ENCODE measurements at regions of chr11 and their contacts with region 1.

Region 1: DNA sequence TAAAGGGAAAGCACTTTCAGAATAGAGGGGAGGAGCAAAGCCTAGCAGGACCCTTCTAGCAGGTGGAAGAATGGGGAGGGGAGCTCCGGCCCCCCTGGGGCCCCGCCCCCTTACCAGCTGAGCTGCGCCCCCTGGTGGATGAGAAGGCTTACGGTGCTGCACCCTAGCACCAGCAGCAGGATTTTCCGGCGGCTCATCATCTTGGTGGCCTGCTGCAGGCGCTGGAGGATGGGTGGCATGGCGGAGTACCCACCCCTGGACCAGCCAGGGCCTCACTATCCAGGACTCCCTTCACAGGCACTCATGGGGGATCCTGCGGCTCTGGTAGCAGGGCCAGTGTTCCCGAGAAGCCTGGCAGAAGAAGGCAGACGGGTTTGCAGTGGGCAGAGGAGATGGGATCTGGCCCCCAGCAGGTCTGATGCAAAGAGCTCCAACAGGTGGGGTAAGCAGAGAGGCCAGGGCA is 3.8 kb downstream of the GAL3ST3 start:
- DNase-seq: peak; percentile 77 to 89 (median 82)
- H3K4me3 ChIP-seq: no peak overlapping the region
- H3K4me3 Mint-ChIP-seq: peak overlapping the region in 5 of 7 donors; percentile 16 to 75 (median 55)
- H3K27ac ChIP-seq: no peak overlapping the region
- H3K27ac Mint-ChIP-seq: peak overlapping the region in 4 of 8 donors; percentile 55 to 68 (median 56)
- H3K4me1 ChIP-seq: peaks cover 13% of the 10 kb centered on the region
- H3K4me1 Mint-ChIP-seq: peaks cover 10 to 18% (median 14%) of the 10 kb centered on the region in 3 donors
- H3K27me3 ChIP-seq: no peaks in the 10 kb centered on the region
- H3K27me3 Mint-ChIP-seq: peaks cover 4 to 5% of the 10 kb centered on the region in 2 donors

Region 2: DNA sequence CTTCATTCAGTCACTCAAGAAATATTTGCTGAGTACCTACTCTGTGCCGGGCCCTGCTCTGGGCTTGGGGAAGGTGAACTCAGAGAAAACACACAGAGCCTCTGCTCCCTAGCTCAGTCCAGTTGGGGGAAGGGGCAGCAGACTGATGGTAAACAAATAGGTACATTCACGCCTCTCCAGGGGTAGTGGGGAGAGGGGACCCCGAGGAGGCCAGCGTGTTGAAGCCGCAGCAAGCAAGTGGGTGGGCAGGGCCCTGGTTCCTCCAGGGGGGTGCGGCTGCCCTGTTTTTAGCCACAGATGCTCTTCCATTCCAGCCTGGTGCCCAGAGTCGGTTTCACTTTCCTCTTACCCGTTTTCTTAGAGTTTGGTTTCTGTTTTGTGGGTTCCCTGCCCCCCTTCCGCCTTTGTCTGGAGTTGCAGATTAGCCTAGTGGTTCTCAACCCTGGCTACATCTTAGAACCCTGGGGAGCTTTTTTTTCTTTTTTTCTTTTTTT is 117.3 kb before region 1 on chr11:
- CTCF ChIA-PET with region 1: no interaction called
- POLR2A ChIA-PET with region 1: no interaction called
- DNase-seq: peak; percentile 59 to 88 (median 78)
- H3K4me3 ChIP-seq: peak overlapping the region; percentile 63
- H3K4me3 Mint-ChIP-seq: peak overlapping the region; percentile 55 to 88 (median 77)
- H3K27ac ChIP-seq: peak overlapping the region; percentile 70
- H3K27ac Mint-ChIP-seq: peak overlapping the region; percentile 89 to 99 (median 96)
- H3K4me1 ChIP-seq: peaks cover 22% of the 10 kb centered on the region
- H3K4me1 Mint-ChIP-seq: peaks cover 23 to 45% (median 32%) of the 10 kb centered on the region in 3 donors
- H3K27me3 ChIP-seq: no peaks in the 10 kb centered on the region
- H3K27me3 Mint-ChIP-seq: no peaks in the 10 kb centered on the region

Region 3: DNA sequence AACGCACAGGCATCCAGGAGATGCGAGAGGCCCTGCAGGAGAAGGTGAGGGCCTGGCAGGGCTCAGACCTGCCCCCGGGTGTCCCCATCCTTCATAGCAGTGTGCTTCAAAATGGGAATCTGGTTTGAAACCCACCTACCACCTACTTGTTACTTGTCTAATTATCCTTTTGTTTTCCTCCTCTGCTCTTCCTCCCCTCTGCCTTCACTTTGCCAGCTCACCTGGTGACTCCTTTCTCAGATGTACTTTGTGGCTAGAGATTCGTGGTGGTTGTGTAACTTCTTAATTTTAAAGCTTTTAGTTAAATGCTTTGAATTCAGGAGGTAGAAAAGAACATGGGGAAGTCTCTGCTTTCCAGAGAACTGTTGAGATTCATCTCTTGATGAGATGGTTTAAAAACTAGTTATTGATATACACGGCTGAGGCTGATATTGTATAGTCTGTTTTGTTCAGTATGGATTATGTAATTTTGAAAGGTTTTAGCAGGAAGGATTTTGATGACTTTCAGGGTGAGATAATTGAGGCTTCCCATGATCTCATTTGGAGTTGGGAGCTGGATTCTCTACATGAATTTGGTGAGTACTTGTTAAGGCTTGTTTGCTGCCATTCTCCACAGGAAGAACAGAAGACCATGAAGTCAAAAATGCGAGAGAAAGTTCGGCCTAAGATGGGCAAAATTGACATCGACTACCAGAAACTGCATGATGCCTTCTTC is 14.9 kb after region 1 on chr11:
- CTCF ChIA-PET with region 1: interaction called, 27 read pairs
- POLR2A ChIA-PET with region 1: no interaction called
- DNase-seq: no peak
- H3K4me3 ChIP-seq: no peak overlapping the region
- H3K4me3 Mint-ChIP-seq: no peak overlapping the region
- H3K27ac ChIP-seq: no peak overlapping the region
- H3K27ac Mint-ChIP-seq: peak overlapping the region in 4 of 8 donors; percentile 11 to 93 (median 51)
- H3K4me1 ChIP-seq: no peaks in the 10 kb centered on the region
- H3K4me1 Mint-ChIP-seq: peaks cover 16 to 42% (median 25%) of the 10 kb centered on the region in 3 donors
- H3K27me3 ChIP-seq: no peaks in the 10 kb centered on the region
- H3K27me3 Mint-ChIP-seq: no peaks in the 10 kb centered on the region

Measured in CD8-positive, alpha-beta memory T cell (primary cell).